Head of caudate nucleus (tissue), 42 donors: ENCODE measurements at regions of chr15 and their contacts with region 1.

Region 1: GRCh38 chr15:45457641-45458433 is 64.7 kb downstream of the SLC30A4 start:
- DNase-seq: peak; percentile 34 to 95 (median 77)

Region 2: GRCh38 chr15:45346381-45346780 is 111.5 kb before region 1 on chr15:
- intact Hi-C with region 1: no loop called
- DNase-seq: no peak

Region 3: DNA sequence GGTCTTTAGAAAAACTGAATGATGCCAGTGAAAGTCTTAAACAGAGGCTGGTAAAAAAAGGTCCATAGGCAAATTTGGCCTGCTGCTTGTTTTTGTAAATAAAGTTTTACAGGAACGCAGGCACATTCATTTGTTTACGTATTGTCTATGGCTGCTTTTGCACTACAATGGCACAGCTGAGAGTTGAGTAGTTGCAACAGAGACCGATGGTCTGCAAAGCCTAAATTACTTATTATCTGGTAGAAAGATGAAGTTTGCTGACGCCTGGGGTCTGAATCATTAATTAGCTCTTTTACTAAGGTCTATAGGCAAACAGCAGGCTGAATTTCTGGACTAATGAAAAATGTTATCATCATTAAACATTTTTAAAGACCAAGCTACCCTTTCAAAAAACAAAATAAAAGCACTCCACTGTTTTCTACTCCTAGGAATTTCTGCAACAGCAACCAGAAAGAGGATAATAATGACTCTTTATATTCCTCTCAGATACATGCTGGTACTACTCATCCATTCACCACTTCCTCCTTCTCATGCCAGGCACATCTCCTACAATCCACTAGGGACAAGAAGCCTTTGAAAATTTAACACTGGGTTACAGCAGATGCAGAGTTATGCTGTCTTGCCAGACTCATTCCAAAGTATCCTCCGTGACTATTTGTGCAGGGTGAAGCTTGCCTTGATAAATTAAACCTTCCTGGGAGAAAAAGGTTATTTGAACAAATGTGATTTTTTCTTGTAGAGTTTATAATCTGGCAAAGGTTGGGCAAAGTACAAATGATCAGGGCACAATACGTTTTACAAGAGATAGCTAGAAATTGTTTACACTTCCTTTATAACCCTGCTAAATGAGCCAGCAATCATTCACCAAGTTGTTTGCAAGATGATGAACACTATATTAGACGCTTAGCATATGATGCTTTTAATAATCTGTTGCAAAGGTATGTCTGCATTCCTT is 85.5 kb before region 1 on chr15:
- intact Hi-C with region 1: no loop called
- DNase-seq: peak in 31 of 42 donors; percentile 17 to 90 (median 74)

Region 4: GRCh38 chr15:45402162-45402954 is 55.5 kb before region 1 on chr15:
- intact Hi-C with region 1: loop called (anchors 10 kb)
- DNase-seq: peak; percentile 93 to 99 (median 98)

Region 5: DNA sequence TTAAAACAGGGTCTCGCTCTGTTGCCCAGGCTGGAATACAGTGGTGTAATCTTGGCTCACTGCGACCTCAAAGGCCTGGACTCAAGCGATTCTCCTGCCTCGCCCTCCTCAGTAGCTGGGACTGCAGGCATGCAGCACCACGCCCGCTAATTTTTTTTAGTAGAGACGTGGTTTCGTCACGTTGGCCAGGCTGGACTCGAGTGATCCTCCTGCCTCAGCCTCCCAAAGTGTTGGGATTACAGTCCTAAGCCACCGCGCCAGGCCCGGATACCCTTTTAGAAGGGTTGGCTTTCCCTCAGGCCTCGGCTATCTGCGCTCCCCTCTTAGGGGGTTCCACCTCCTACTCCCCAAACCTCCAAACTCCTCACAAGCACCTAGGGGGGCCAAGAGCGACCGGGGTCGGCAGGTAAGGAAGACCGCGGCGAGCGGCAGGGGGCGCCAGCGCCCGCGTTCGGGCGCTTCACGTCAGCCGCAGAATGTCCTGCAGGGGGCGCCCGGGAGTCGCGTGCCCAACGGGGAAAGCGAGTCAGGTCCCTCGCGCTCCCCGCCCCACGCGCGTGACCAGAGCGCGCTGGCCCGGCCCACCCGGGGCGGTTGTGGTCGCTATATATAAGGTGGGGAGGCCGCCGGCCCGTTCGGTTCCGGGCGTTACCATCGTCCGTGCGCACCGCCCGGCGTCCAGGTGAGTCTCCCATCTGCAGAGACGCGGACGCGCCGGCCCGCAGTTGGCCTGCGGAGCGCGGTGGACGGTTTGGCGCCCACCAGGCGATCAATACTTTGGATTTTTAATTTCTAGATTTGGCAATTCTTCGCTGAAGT is 27.7 kb before region 1 on chr15:
- intact Hi-C with region 1: loop called (anchors 2 kb)
- DNase-seq: peak in 41 of 42 donors; percentile 13 to 88 (median 68)

Region 6: GRCh38 chr15:45486317-45486716 is 28.5 kb after region 1 on chr15:
- intact Hi-C with region 1: no loop called
- DNase-seq: no peak

Region 7: DNA sequence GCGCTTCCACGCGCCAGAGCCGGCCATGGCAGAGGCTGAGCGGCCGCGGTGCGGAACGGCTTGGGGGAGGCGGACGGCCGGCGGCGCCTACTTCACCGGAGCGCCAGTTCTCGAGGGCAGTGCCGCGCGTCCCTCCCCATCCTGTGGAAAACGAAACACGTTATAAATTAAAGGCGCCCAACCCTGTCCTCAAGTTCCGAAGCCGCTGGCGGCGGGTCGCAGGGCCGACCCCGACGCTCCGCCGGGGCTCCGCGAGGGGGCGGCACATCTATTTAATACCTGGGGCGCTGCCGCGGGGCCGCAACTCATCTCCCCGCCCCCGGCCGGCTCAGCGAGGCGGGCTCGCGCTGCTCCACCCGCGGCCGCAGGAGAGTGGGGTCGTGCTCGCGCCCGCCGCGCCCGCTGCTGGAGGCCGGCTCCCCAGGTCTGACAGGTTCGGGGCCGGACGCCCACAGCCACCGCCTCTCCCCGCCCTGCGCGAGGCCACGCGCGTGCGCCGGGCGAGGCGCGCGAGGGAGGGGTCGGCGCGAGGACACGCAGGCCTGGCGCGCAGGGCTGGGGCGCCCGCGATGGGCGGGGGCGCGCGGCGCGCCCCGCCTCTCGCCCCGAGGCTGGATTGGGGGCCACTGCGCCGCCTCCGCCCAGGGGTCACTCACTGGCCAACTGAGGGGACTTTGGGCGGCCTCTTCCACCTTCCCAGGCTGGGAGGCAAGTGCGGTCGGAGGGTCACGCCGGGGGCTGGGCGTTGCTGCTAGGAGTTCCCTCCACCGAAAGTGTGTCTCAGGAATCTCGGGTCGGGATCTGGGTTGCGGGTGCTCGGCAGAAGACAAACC is 64.7 kb after region 1 on chr15 and contains the start of gene SLC30A4:
- intact Hi-C with region 1: loop called (anchors 5 kb)
- DNase-seq: peak; percentile 41 to 91 (median 80)

Region 8: DNA sequence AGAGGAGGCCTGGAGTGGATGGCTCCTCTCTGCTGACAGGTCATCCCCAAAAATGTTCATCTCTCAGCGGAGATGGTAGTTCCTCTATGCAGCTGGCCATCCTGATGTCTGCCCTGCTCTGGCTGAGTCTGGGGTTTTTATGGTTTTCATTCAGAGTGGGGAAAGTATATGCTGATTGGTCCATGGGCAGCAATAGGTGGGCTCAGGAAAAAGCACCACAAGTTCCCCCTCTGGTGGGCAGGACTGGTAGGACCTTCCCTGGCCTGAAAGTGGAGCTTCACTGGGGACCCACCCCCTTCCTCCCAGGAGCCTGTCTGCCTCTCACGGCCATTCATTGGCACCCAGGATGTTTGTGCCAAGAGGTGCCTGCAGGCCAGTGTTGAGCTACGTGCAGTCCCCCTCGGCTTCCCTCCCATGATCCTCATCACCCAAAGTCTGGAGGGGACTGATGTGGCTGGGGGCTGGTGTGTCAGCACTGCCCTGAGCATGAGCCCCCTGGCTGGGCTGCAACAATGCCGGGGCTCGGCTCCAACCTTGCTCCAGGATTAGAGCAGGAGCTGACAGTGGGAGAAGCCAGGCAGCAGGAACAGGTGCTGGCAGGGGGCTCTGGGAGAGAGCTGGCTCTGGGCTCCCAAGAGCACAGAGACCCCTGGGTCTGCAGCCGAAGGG is 116.3 kb after region 1 on chr15:
- intact Hi-C with region 1: no loop called
- DNase-seq: no peak

Region 9: DNA sequence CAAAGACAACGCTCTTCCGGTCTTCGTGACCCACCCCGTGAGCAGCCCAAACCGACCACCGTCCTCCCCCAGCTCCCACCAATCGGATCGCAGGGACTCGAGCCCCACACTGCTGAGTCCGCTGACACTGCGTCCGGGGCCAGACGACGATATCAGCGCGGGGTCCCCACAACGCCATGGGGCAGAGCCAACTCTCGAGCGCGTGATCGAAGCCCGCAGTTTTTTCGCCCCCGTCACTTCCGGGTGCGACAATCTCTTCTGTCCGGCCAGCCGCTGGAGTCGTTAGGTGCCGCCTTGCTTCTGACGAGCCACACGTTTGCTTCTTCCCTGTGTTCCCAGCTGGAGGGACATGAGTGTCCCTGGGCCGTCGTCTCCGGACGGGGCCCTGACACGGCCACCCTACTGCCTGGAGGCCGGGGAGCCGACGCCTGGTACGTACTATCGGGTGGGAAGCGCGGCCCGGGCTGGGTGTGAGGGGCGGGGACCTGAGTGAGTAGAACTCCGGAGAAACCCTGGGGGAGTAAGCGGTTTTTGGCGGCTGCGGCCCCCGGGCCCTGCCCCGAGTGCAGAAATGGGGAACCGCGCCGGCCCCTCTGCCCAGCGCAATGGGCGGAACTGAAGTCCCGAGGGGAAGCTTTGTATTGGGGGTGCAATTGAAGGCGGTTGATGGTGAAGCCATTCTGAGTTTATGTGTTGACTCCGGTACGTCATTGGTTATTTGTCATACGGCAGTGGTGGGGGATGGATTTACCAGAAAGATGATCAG is 129.4 kb after region 1 on chr15 and contains the start of gene BLOC1S6:
- intact Hi-C with region 1: loop called (anchors 10 kb)
- DNase-seq: peak; percentile 82 to 97 (median 92)

Region 10: DNA sequence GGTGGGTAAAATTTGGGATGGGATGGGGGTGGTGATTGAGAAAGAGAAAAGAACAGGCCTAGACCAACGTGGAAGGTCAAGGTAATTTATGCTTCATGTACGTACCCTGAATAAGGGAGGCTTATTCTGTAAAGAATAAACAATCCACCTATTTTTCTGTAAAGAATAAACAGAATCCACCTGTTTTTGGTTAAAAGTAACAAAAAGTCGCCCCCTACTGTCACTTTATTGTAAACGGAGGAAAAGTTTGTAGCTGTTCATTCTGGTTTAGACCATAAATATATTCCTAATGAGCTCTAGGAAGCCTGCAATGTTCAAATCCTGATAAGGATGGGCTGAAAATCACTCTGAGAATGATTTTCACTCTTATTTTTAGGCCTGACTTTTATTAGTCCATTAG is 153.5 kb after region 1 on chr15:
- intact Hi-C with region 1: loop called (anchors 2 kb)
- DNase-seq: peak in 1 of 42 donors; percentile 27